ENCODE measurements at regions of chr22 and their contacts with region 1.

Region 1: GRCh38 chr22:20568989-20569769 is 61.8 kb downstream of the MED15 start:
- DNase-seq: peak; percentile 99
- H3K4me3 ChIP-seq: no peak overlapping the region
- H3K27ac ChIP-seq: peak overlapping the region; percentile 98
- H3K4me1 ChIP-seq: peaks cover 64% of the 10 kb centered on the region
- H3K27me3 ChIP-seq: no peaks in the 10 kb centered on the region

Region 2: GRCh38 chr22:20624161-20624616 is 55.0 kb after region 1 on chr22:
- in situ Hi-C with region 1: loop called (anchors 10 kb)
- DNase-seq: peak; percentile 50
- H3K4me3 ChIP-seq: no peak overlapping the region
- H3K27ac ChIP-seq: no peak overlapping the region
- H3K4me1 ChIP-seq: no peaks in the 10 kb centered on the region
- H3K27me3 ChIP-seq: peaks cover 32% of the 10 kb centered on the region